Activated CD4-positive, alpha-beta T cell treated with anti-CD3 and anti-CD28 coated beads for 36 hours (primary cell): ENCODE measurements at regions of chr2 and their contacts with region 1.

Region 1: GRCh38 chr2:190088917-190089316 is 26.4 kb upstream of the MSTN start:
- DNase-seq: peak; percentile 64
- ATAC-seq: peak; percentile 69
- H3K4me3 Mint-ChIP-seq: no peak overlapping the region
- H3K27ac Mint-ChIP-seq: no peak overlapping the region
- H3K4me1 Mint-ChIP-seq: no peaks in the 10 kb centered on the region
- H3K27me3 Mint-ChIP-seq: no peaks in the 10 kb centered on the region

Region 2: GRCh38 chr2:190099890-190100697 is 11.2 kb after region 1 on chr2:
- CTCF ChIA-PET with region 1: interaction called, 16 read pairs
- POLR2A ChIA-PET with region 1: no interaction called
- intact Hi-C with region 1: no loop called
- DNase-seq: no peak
- ATAC-seq: no peak
- H3K4me3 Mint-ChIP-seq: no peak overlapping the region
- H3K27ac Mint-ChIP-seq: no peak overlapping the region
- H3K4me1 Mint-ChIP-seq: no peaks in the 10 kb centered on the region
- H3K27me3 Mint-ChIP-seq: peaks cover 7% of the 10 kb centered on the region

Region 3: DNA sequence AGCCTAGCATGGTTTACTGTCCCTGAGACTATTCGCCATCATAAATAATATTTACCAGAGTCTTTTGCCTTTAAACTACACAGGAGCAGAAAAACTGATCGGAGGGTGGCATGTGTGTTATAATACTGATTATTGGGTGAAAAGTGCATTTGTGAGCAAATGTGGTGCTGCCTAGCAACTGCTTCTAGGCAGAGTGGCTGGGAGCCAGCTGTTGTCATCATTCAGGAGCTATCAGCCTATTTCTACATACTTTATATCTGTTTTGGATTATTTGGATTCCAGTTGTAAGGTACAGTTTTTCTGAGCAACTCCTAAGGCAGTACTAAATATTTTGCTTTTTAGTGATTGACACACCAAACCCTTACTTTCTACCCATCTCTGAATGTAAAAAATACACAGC is 48.6 kb after region 1 on chr2:
- CTCF ChIA-PET with region 1: no interaction called
- POLR2A ChIA-PET with region 1: no interaction called
- intact Hi-C with region 1: no loop called
- DNase-seq: no peak
- ATAC-seq: no peak
- H3K4me3 Mint-ChIP-seq: no peak overlapping the region
- H3K27ac Mint-ChIP-seq: no peak overlapping the region
- H3K4me1 Mint-ChIP-seq: no peaks in the 10 kb centered on the region
- H3K27me3 Mint-ChIP-seq: no peaks in the 10 kb centered on the region

Region 4: DNA sequence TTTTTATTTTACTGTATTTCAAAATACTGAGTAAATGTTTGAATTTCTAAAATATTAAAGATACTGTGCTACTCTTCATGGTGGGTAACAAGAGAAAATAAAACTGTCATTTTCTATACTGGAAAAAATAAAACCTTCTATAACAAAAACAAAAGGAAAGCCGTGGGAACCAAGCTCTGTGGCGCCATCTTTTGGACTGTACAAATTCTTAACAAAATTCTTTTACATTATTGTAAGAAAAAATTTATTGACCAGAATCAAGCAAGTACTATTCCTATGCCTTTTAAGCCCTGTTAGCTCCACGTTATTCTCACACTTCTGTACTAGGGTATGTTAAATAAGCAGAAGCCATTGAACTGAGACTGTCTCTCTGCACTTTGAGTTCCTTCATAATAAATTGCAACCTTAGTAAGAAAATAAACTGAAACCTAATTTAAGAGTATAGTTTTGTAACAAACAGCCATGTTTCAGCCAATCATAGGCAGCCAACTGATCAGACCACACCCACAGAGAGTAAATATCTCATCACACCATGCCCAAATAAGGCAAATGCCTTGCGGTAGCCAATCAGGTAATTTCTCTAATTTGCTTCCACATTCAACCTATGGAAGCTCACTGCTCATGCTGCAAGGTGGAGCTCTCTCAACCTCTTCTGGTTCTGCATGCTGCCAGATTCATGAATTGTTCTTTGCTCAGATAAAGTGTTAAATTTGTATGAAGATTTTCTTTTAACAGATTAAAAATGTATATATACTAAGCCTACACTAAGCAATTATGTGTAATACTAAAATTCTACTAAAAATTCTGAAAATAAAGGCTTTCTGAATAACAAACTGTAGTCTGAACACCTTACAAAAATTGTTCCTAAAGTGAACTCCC is 188.6 kb after region 1 on chr2:
- CTCF ChIA-PET with region 1: interaction called, 18 read pairs
- POLR2A ChIA-PET with region 1: no interaction called
- intact Hi-C with region 1: loop called (anchors 1 kb)
- DNase-seq: peak; percentile 45
- ATAC-seq: peak; percentile 76
- H3K4me3 Mint-ChIP-seq: no peak overlapping the region
- H3K27ac Mint-ChIP-seq: no peak overlapping the region
- H3K4me1 Mint-ChIP-seq: peaks cover 3% of the 10 kb centered on the region
- H3K27me3 Mint-ChIP-seq: no peaks in the 10 kb centered on the region

Region 5: GRCh38 chr2:190376591-190377245 is 287.8 kb after region 1 on chr2:
- CTCF ChIA-PET with region 1: interaction called, 3 read pairs
- POLR2A ChIA-PET with region 1: no interaction called
- intact Hi-C with region 1: loop called (anchors 1 kb)
- DNase-seq: no peak
- ATAC-seq: no peak
- H3K4me3 Mint-ChIP-seq: no peak overlapping the region
- H3K27ac Mint-ChIP-seq: no peak overlapping the region
- H3K4me1 Mint-ChIP-seq: no peaks in the 10 kb centered on the region
- H3K27me3 Mint-ChIP-seq: no peaks in the 10 kb centered on the region

Region 6: GRCh38 chr2:191030521-191031154 is 941.7 kb after region 1 on chr2:
- CTCF ChIA-PET with region 1: no interaction called
- POLR2A ChIA-PET with region 1: no interaction called
- intact Hi-C with region 1: loop called in 1 of 2 experiments (anchors 10 kb)
- DNase-seq: peak; percentile 57
- ATAC-seq: peak; percentile 82
- H3K4me3 Mint-ChIP-seq: no peak overlapping the region
- H3K27ac Mint-ChIP-seq: peak overlapping the region; percentile 55
- H3K4me1 Mint-ChIP-seq: peaks cover 38% of the 10 kb centered on the region
- H3K27me3 Mint-ChIP-seq: no peaks in the 10 kb centered on the region